ENCODE measurements at regions of chr14 and their contacts with region 1.

Region 1: GRCh38 chr14:24215495-24216344 is at the start of gene MDP1:
- DNase-seq: peak; percentile 96
- H3K4me3 Mint-ChIP-seq: peak within 1 kb of the TSS; percentile 93
- H3K27ac Mint-ChIP-seq: peak within 1 kb of the TSS; percentile 96
- H3K4me1 Mint-ChIP-seq: peaks cover 43% of the 10 kb centered on the region
- H3K27me3 Mint-ChIP-seq: peaks cover 2% of the 10 kb centered on the region
- total RNA-seq, gene MDP1: 11.6 and 13.5 TPM in 2 replicates

Region 2: DNA sequence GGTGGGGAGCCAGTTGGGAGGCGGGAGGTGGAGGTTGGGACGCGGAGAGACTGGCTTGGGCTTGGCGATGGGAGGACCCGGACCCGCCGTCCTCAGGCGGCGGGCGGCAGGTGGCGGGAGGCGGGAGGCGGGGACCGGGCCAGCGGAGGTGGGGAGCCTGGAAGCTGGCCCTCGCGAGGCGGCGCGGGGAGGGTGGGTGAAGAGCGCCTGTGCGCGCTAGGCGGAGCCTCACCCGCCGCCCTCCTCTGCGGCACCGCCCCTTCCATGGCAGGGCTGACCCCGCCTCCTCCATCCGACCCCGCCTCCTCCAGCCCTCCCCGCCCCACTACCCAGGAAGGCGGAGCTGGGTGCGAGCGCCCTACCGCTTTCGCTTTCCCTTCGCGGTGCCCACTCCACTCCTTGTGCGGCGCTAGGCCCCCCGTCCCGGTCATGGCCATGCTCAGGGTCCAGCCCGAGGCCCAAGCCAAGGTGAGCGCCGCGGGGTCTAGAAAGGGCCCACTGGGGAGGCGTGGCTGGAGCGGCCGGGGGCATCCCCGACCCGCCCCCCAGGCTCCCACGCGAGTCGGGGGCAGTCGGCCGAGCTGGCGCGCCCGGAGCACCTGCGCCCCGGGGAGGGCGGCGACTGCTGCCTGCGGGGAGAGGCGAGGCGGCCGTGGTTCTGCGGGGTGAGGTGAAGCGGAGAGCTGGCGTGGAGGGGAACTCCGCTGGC is 79.7 kb before region 1 on chr14 and contains the start of gene PSME1:
- intact Hi-C with region 1: loop called (anchors 1 kb)
- DNase-seq: peak; percentile 98
- H3K4me3 Mint-ChIP-seq: peak within 1 kb of the TSS; percentile 94
- H3K27ac Mint-ChIP-seq: peak within 1 kb of the TSS; percentile 93
- H3K4me1 Mint-ChIP-seq: peaks cover 49% of the 10 kb centered on the region
- H3K27me3 Mint-ChIP-seq: no peaks in the 10 kb centered on the region
- total RNA-seq, gene PSME1: 300 and 306 TPM in 2 replicates

Region 3: DNA sequence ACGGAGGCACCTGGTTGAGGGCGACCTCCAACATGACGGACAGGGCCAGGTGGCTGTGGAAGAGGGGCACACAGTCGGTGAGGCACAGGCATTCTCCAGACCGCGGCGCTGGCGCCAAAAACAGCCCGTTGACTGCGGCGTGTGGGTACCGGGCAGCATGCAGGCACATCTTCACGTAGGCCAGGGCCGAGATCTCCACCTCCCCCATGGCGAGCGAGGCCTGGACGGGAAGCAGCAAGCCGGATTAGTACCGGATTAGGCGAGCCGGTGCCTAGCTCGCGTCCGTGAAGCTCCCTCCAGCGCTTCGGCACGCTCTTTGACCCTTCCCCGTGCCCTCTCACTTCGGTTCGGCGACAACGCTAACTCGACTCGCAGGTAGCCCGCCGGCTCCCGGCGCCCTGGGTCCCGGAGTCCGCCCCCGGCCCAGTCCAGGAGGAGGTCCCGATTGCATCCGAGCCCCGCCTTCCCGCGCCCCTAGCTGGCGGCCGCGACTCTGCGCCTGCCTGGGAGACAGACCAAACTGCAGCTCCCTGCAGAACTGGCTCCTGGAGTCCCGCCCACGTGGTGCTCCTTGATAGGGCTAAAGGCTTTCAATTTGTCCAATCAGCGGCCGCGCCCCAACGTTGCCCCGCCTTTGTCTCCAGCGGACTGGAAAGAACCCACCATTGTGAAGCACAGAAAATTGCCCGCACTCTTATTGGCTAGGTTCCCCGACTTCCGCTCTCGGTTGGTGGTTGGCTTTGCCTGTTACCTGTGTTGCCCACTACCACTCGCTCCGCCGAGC is 74.4 kb before region 1 on chr14 and contains the start of gene EMC9:
- intact Hi-C with region 1: loop called (anchors 1 kb)
- DNase-seq: peak; percentile 100
- H3K4me3 Mint-ChIP-seq: peak within 1 kb of the TSS; percentile 94
- H3K27ac Mint-ChIP-seq: peak within 1 kb of the TSS; percentile 94
- H3K4me1 Mint-ChIP-seq: peaks cover 69% of the 10 kb centered on the region
- H3K27me3 Mint-ChIP-seq: no peaks in the 10 kb centered on the region
- total RNA-seq, gene EMC9: 26.6 and 30.3 TPM in 2 replicates

Region 4: DNA sequence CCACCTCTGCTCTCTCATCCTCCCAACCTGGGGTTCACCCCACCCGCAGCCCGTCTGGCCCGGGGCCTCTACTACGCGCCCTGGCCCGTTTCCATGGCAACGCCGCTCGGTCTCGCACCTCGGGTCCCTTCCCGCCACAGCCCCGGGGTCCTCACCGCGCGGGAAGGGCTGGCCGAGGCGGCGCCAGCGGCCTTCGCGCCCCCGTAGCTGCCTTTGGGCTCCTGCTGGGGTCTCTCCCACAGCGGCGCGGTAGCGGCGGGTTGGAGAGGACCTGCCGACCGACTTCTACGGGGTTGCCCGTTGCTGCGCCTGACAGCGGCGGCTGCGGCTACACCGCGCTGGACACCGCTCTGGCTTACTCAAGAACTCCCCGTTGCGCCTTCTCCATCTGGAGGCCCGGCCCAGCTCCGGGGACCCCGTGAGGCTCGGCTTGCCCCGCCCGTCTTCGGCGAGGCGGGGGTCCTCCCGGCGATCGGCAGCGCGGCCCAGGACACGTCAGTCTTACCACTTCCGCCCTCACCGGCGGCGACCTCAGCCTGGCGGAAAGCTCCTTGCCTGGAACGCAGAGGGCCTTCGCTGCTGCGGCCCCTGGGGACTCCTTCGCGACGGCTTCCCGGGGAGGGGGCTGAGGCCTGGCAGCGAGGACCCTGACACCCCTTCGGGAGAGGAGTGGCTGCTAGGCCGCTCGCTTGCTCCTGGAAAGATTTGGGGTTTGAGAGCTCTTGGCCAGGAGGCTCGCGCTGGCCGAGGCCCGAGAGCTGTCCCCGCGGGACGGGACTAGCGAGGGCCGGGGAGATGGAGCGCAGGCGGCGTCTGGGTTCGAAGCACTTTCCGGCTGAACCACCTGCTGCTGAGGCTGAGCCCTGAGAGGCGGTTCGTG is 20.3 kb before region 1 on chr14 and contains the start of gene TM9SF1:
- intact Hi-C with region 1: loop called (anchors 1 kb)
- DNase-seq: peak; percentile 97
- H3K4me3 Mint-ChIP-seq: peak within 1 kb of the TSS; percentile 87
- H3K27ac Mint-ChIP-seq: peak within 1 kb of the TSS; percentile 96
- H3K4me1 Mint-ChIP-seq: peaks cover 46% of the 10 kb centered on the region
- H3K27me3 Mint-ChIP-seq: no peaks in the 10 kb centered on the region
- total RNA-seq, gene TM9SF1: 35.1 and 36.4 TPM in 2 replicates

Region 5: DNA sequence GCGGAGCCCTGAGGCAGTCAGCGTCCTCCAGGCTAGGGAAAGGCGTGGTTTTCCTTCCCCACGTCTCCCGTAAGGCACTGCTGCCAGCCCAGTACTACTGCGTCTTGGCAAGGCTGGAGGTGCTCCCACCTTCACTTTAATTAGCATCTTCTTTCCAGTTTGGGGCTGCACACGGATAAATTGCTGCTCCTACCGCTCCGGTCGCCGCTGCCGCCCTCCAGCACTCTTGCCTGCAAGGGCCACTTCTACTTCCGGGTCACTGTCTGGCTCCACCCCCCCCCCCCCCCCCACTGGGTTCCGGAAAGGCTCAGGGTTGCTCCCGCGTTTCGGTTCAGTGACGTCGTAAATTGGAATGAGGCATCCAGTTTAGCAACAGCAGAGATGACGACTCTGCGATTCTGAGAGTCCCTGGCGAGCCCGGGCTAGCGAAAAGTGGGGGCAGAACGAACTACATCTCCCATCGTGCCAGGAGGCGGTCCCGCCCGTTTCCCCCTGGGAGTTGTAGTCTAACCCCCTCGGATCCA is 16.5 kb after region 1 on chr14 and contains the start of gene NEDD8:
- intact Hi-C with region 1: loop called (anchors 1 kb)
- DNase-seq: peak; percentile 96
- H3K4me3 Mint-ChIP-seq: peak within 1 kb of the TSS; percentile 92
- H3K27ac Mint-ChIP-seq: peak within 1 kb of the TSS; percentile 92
- H3K4me1 Mint-ChIP-seq: peaks cover 41% of the 10 kb centered on the region
- H3K27me3 Mint-ChIP-seq: no peaks in the 10 kb centered on the region
- total RNA-seq, gene NEDD8: 188 and 190 TPM in 2 replicates

Region 6: DNA sequence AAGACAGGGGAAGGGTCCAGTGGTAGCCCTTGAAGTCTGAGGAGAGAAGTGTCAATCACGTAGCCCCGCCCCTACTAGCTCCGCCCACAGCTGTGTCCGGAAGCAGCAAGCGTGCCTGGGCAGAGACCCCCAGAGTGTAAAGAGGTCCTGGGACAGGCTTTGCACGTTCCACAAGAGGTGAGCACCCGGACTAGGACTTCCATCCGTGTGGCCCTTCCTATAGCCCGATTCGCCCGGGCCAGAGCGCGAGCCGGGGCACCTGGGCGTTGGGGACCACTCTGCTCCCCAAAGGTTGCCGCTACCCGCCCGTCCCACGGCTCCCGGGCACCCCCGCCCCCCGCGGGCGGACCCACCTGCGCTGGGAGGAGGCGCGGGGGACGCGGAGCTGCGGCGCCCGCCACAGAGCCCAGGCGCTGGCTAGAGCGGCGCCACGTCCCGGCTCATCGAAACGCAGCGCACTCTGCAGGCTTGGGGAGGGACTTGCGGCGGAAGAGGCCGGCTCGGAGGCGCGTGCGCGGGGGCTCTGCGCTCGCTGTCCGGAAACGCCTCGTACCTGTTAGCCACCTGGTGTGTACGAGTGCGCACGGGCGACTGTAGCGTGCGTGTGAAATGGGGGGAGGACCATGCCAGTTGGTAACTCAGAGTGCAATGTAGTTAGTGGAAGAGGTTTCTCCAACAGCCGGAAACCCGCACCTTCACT is 55.6 kb after region 1 on chr14 and contains the start of gene RABGGTA:
- intact Hi-C with region 1: loop called (anchors 1 kb)
- DNase-seq: peak; percentile 97
- H3K4me3 Mint-ChIP-seq: peak within 1 kb of the TSS; percentile 93
- H3K27ac Mint-ChIP-seq: peak within 1 kb of the TSS; percentile 95
- H3K4me1 Mint-ChIP-seq: peaks cover 42% of the 10 kb centered on the region
- H3K27me3 Mint-ChIP-seq: no peaks in the 10 kb centered on the region
- total RNA-seq, gene RABGGTA: 49.6 and 51.1 TPM in 2 replicates

Region 7: DNA sequence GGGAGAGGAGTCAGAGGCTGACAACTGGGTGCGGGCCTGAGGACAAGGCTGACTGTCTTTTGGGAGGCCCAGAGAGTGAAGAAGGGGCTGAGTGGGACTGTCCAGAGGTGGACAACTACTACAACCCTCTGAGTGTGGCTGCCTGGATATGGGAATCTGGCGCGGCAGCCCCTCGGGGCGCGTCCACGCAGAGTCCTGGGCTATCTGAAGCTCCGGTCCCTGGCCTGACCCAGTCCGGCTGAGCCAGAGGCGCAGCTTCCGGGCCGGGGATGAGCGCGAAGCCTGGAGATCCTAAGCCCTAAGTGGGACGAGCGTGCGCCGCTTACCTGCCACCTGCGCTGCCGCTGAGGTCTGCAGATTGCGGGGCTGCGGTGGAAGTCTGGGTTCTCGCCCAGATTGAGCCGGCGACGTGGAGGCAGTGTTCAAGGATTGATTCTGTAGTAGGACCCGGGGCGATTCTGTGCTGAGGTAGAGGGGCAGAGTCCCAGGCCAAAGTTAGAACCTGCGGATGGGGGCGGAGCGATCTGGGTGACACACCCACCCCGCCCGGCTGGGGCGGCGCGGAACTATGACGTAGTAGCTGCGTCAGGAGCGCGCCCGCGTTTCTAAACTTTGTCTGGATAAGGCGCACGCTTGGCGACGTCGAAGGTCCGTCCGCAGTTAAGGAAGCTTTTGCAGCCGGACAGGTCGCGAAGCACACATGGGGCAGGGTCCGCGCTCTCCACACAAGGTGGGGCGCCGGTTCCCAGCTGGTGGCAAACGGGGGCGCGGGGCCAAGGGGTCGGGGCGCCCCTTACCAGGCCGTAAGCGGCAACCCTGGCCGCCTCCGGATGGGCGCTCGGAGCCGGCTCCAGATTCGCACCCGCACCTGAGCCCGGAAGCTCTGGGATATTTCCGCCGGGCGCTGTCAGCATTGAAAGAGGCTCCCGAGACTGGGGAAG is 83.8 kb after region 1 on chr14 and contains the starts of genes DHRS1 and NOP9:
- intact Hi-C with region 1: loop called (anchors 1 kb)
- DNase-seq: peak; percentile 98
- H3K4me3 Mint-ChIP-seq: peak within 1 kb of the TSS; percentile 86
- H3K27ac Mint-ChIP-seq: peak within 1 kb of the TSS; percentile 91
- H3K4me1 Mint-ChIP-seq: peaks cover 36% of the 10 kb centered on the region
- H3K27me3 Mint-ChIP-seq: no peaks in the 10 kb centered on the region
- total RNA-seq, gene DHRS1: 10.1 and 10.3 TPM in 2 replicates
- total RNA-seq, gene NOP9: 48.3 and 52.2 TPM in 2 replicates

Measured in activated CD4-positive, alpha-beta T cell treated with anti-CD3 and anti-CD28 coated beads, Interleukin-2, amount 10 ng/mL, durations not matched to agents 24 days and 14 days (primary cell).